ENCODE measurements at regions of chr11 and their contacts with region 1.

Region 1: DNA sequence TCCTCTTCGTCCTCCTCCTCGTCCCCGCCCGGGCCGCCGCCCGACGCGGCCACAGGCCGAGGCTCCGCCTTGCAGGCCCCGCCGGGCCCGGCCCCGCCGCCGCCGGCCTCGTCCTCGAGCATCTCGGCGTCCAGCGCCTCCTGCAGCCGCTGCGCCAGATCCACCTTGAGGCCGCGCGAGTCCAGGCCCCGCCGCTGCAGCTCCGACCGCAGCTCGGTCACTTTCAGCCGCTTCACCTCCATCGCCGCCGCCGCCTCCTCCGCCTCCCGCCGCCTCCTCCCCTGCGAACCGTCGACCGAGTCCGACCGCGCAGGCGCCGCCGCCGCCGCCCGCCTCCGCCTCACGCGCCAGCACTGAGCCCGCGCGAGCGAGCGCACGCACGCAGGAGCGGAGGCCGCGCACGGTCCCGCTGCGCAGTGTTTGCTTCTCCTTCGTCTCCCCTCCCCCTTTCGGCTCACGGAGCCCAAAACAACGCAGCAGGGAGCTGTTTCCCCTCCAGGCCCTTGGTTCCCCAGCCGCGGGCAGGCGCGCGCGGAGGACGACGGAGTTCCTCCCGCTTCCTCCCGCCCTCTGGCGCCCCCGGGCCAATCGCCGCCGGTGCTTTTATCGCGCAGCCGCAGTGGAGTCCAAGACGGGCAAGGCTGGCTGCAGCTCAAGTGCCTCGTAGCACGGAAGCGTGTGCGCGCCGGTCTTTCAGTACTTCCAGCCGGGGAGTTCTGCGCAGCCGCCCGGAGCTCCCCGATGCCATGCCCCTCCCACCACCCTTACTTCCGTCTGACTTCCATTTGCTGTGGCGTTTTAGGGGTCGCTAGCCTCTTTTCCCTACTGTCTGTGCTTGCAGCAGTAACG is at the start of gene HNRNPUL2:
- DNase-seq: peak; percentile 98
- ATAC-seq: peak; percentile 84
- H3K4me3 ChIP-seq: peak within 1 kb of the TSS; percentile 98 to 100
- H3K27ac ChIP-seq: peak within 1 kb of the TSS; percentile 96
- H3K4me1 ChIP-seq: peaks cover 14 to 25% of the 10 kb centered on the region in 2 experiments
- H3K27me3 ChIP-seq: no peaks in the 10 kb centered on the region
- CTCF ChIP-seq: no peak
- POLR2A ChIP-seq: peak; percentile 79
- RAD21 ChIP-seq: no peak
- total RNA-seq, gene HNRNPUL2: 45.8 TPM

Region 2: GRCh38 chr11:62656796-62657429 is 70.2 kb before region 1 on chr11:
- CTCF ChIA-PET with region 1: no interaction called
- POLR2A ChIA-PET with region 1: no interaction called
- RAD21 ChIA-PET with region 1: no interaction called
- intact Hi-C with region 1: no loop called
- DNase-seq: no peak
- ATAC-seq: no peak
- H3K4me3 ChIP-seq: no peak overlapping the region
- H3K27ac ChIP-seq: no peak overlapping the region
- H3K4me1 ChIP-seq: peaks cover 2 to 16% of the 10 kb centered on the region in 2 experiments; a peak in 3 of 4 replicates
- H3K27me3 ChIP-seq: no peaks in the 10 kb centered on the region
- CTCF ChIP-seq: no peak
- POLR2A ChIP-seq: no peak
- RAD21 ChIP-seq: no peak

Region 3: GRCh38 chr11:62753736-62754603 is 26.8 kb after region 1 on chr11 and contains the start of gene ZBTB3:
- CTCF ChIA-PET with region 1: interaction called, 10 read pairs
- POLR2A ChIA-PET with region 1: interaction called, 41 read pairs
- RAD21 ChIA-PET with region 1: no interaction called
- intact Hi-C with region 1: no loop called
- DNase-seq: peak; percentile 99
- ATAC-seq: peak; percentile 96
- H3K4me3 ChIP-seq: peak within 1 kb of the TSS; percentile 70 to 84
- H3K27ac ChIP-seq: peak within 1 kb of the TSS; percentile 76
- H3K4me1 ChIP-seq: peaks cover 4 to 18% of the 10 kb centered on the region in 2 experiments; a peak in 3 of 4 replicates
- H3K27me3 ChIP-seq: no peaks in the 10 kb centered on the region
- CTCF ChIP-seq: no peak
- POLR2A ChIP-seq: peak; percentile 86
- RAD21 ChIP-seq: no peak
- total RNA-seq, gene ZBTB3: 11.3 TPM

Region 4: GRCh38 chr11:62805076-62805892 is 78.1 kb after region 1 on chr11 and contains the start of gene NXF1:
- CTCF ChIA-PET with region 1: no interaction called
- POLR2A ChIA-PET with region 1: no interaction called
- RAD21 ChIA-PET with region 1: no interaction called
- intact Hi-C with region 1: no loop called
- DNase-seq: peak; percentile 90
- ATAC-seq: peak; percentile 91
- H3K4me3 ChIP-seq: peak within 1 kb of the TSS; percentile 68 to 79
- H3K27ac ChIP-seq: peak within 1 kb of the TSS; percentile 85
- H3K4me1 ChIP-seq: peaks cover 0 to 21% of the 10 kb centered on the region in 2 experiments; a peak in 3 of 4 replicates
- H3K27me3 ChIP-seq: no peaks in the 10 kb centered on the region
- CTCF ChIP-seq: no peak
- POLR2A ChIP-seq: peak; percentile 99
- RAD21 ChIP-seq: no peak
- total RNA-seq, gene NXF1: 55.5 TPM

Region 5: DNA sequence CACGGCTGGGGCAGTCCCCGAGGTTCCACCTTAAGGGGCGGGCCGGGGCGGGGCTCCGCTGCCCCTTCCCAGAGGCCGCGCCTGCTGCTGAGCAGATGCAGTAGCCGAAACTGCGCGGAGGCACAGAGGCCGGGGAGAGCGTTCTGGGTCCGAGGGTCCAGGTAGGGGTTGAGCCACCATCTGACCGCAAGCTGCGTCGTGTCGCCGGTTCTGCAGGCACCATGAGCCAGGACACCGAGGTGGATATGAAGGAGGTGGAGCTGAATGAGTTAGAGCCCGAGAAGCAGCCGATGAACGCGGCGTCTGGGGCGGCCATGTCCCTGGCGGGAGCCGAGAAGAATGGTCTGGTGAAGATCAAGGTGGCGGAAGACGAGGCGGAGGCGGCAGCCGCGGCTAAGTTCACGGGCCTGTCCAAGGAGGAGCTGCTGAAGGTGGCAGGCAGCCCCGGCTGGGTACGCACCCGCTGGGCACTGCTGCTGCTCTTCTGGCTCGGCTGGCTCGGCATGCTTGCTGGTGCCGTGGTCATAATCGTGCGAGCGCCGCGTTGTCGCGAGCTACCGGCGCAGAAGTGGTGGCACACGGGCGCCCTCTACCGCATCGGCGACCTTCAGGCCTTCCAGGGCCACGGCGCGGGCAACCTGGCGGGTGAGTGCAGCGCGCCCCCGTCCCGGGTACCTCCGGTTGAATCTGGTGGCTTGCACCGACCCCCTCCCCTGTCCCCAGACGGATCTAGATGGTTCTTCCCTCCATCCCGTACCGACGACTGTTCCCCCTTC is 153.9 kb after region 1 on chr11 and contains the start of gene SLC3A2:
- CTCF ChIA-PET with region 1: no interaction called
- POLR2A ChIA-PET with region 1: no interaction called
- RAD21 ChIA-PET with region 1: no interaction called
- intact Hi-C with region 1: no loop called
- DNase-seq: peak; percentile 68
- ATAC-seq: peak; percentile 87
- H3K4me3 ChIP-seq: peak within 1 kb of the TSS; percentile 75 to 85
- H3K27ac ChIP-seq: peak within 1 kb of the TSS; percentile 96
- H3K4me1 ChIP-seq: peaks cover 38 to 74% of the 10 kb centered on the region in 2 experiments
- H3K27me3 ChIP-seq: no peaks in the 10 kb centered on the region
- CTCF ChIP-seq: peak in 2 of 3 experiments; percentile 47 to 52; a peak in 4 of 6 replicates
- POLR2A ChIP-seq: peak; percentile 98
- RAD21 ChIP-seq: no peak
- total RNA-seq, gene SLC3A2: 418 TPM

Measured in HCT116 (cell line).